Transverse colon (tissue), 4 donors: ENCODE measurements at regions of chr9 and their contacts with region 1.

Region 1: DNA sequence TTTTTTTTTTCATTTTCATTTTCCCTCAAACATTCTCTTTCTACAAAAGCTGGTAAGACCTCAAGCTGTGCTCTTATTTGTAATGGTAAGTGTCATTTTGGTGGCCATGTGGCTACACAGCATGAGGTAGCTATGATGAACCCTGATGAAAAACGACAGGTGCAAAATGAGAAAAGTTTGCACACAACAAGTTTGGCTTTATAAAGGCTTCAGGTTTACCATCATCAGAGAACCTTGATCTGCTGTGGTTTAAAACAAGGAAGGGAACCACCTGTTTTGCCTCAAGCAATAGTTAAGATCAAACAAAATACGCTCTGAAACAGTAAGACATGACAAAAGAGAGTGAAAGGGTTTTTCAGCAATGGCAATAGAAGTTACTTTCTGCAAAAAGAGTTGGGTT is 1124.6 kb upstream of the ACO1 start:
- DNase-seq: no peak
- H3K4me3 ChIP-seq: no peak overlapping the region
- H3K27ac ChIP-seq: no peak overlapping the region
- H3K4me1 ChIP-seq: no peaks in the 10 kb centered on the region
- H3K27me3 ChIP-seq: no peaks in the 10 kb centered on the region
- CTCF ChIP-seq: no peak
- EP300 ChIP-seq: no peak
- POLR2A ChIP-seq: no peak

Region 2: DNA sequence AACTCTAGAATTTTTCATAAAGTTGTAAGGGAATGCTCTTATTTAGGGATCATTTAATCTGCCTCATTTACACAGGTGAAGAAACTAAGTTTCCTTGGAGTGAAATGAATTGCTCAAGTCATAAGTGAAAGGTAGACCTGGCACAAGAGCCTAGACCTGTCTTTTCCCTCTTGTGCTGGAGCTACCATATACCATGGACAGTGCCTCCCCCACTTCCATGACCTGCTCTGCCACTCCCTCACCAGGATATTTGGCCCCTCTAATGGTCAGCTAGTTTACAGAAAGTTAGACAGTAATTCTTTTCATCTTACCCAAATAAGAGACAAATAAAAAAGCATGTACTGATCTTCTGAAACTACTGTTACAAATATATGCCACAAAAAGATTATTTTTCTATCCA is 1019.2 kb after region 1 on chr9:
- in situ Hi-C with region 1: no loop called
- intact Hi-C with region 1: loop called (anchors 5 kb)
- DNase-seq: no peak
- H3K4me3 ChIP-seq: no peak overlapping the region
- H3K27ac ChIP-seq: no peak overlapping the region
- H3K4me1 ChIP-seq: no peaks in the 10 kb centered on the region
- H3K27me3 ChIP-seq: no peaks in the 10 kb centered on the region
- CTCF ChIP-seq: no peak
- EP300 ChIP-seq: no peak
- POLR2A ChIP-seq: no peak